ENCODE measurements at regions of chr4 and their contacts with region 1.

Region 1: DNA sequence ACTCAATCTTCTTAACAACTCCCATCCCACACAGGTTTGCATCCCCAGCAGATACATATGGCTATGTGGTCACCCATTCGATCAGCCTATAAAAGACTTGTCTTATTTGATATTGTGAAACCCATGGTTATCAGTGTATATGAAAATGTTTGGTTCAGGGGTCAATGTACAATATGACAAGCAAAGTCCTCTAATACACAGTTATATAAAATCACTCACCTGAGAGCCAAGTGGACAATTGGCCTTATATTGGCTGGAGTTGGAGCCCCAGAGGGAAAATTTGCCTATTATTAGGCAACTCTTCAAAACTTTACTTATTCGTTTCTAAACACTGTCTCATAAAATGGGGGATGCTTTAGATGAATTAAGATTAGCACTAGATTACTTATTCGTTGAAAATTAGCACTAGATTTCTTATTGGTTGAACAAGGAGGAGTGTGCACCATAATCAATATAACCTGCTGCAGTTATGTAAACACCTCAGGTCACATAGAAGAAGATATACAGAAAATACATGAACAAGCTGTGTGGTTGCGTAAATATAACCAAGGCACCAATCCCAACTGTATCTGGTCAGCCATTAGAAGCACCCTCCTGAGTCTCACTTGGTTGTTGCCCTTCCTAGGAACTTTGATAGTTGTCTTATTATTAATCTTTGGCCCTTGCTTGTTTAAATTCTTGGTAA is 10.7 kb upstream of the ADH4 start:
- DNase-seq: no peak
- ATAC-seq: no peak
- H3K4me3 Mint-ChIP-seq: no peak overlapping the region
- H3K27ac Mint-ChIP-seq: no peak overlapping the region
- H3K4me1 Mint-ChIP-seq: peaks cover under 1% of the 10 kb centered on the region
- H3K27me3 Mint-ChIP-seq: peaks cover 2% of the 10 kb centered on the region

Region 2: DNA sequence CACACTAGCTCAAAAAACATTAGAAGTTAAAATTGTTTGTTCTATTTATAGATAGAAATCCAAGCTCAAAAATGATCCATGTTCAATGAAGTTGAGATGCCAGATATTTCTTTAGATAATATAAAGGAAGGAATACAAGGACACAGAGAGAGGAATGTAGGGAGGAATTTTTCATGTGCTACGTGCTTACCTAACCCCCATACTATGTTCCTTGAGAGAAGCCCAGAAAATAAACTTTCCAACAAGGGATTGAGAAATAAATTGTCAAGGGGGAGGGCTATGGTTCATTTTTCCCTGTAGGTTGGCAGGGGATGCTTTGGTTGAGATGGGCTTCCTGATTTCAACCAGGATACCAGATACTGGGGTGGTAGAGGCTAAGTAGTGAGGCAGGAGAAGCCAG is 50.6 kb before region 1 on chr4:
- CTCF ChIA-PET with region 1: no interaction called
- POLR2A ChIA-PET with region 1: no interaction called
- intact Hi-C with region 1: no loop called
- DNase-seq: no peak
- ATAC-seq: no peak
- H3K4me3 Mint-ChIP-seq: no peak overlapping the region
- H3K27ac Mint-ChIP-seq: no peak overlapping the region
- H3K4me1 Mint-ChIP-seq: no peaks in the 10 kb centered on the region
- H3K27me3 Mint-ChIP-seq: no peaks in the 10 kb centered on the region

Region 3: DNA sequence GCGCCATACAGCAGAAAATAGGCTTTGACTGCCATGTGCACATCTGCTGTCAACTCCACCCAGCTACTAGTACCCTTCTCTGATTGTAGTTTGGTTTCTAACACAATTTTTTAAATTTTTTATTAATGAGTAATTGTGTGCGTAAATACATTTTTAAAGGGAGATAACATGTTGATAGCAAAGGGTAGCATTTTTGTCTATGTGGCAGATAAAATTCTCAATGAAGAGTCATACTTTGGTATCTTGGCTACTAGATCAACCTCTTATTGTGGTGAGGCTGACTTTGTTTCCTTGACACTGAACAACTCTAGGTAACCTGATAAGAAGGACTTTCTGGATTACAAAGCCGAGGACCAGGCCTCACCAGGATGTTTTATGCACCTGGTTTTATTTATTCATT is 20.2 kb before region 1 on chr4:
- CTCF ChIA-PET with region 1: no interaction called
- POLR2A ChIA-PET with region 1: no interaction called
- intact Hi-C with region 1: loop called in 1 of 2 experiments (anchors 1 kb)
- DNase-seq: no peak
- ATAC-seq: no peak
- H3K4me3 Mint-ChIP-seq: no peak overlapping the region
- H3K27ac Mint-ChIP-seq: no peak overlapping the region
- H3K4me1 Mint-ChIP-seq: no peaks in the 10 kb centered on the region
- H3K27me3 Mint-ChIP-seq: no peaks in the 10 kb centered on the region